ENCODE measurements at regions of chr16 and their contacts with region 1.

Region 1: DNA sequence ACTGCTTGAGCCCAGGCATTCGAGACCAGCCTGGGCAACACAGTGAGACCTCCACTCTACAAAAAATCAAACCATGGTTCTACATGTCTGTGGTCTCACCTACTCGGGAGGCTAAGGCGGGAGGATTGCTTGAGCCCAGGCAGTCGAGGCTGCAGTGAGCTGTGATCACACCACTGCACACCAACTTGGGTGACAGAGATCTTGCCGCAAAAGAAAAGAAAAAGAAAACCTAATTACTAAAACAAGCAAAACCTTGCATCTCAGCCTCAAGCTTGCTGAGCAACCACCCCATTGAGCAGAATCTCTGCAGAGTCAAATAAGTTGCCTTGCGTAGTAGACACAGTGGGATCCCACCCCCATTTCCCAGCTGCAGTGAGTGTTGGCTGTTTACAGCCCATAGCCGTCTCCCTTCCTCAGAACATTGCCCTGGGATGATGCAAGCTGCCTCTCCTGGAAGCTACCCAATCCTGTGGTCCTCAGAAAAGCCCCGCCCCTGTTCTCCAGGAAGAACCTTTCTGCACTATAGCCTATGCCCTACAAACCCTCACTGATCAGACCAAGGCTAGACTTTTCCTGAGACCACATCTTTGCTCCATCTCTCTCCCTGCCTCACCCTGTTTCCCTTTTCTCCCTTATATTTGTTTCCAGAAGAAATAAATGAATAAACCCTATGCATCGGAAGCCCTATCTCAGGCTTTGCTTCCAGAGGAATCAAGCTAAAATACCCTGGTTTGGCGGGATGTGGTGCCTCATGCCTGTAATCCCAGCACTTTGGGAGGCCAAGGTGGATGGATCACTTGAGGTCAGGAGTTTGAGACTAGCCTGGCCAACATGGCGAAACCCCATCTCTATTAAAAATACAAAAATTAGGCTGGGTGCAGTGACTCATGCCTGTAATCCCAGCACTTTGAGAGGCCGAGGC is 16.7 kb upstream of the ERN2 start:
- DNase-seq: peak in 2 of 7 donors; percentile 20 to 28
- H3K4me3 ChIP-seq: no peak overlapping the region
- H3K27ac ChIP-seq: no peak overlapping the region
- H3K4me1 ChIP-seq: no peaks in the 10 kb centered on the region
- H3K27me3 ChIP-seq: no peaks in the 10 kb centered on the region
- CTCF ChIP-seq: no peak
- POLR2A ChIP-seq: no peak

Region 2: GRCh38 chr16:24036614-24037013 is 306.9 kb after region 1 on chr16:
- intact Hi-C with region 1: loop called in 1 of 2 experiments (anchors 10 kb)
- DNase-seq: peak in 6 of 7 donors; percentile 26 to 60 (median 34)
- H3K4me3 ChIP-seq: no peak overlapping the region
- H3K27ac ChIP-seq: no peak overlapping the region
- H3K4me1 ChIP-seq: no peaks in the 10 kb centered on the region
- H3K27me3 ChIP-seq: peaks cover 5% of the 10 kb centered on the region
- CTCF ChIP-seq: peak; percentile 41 to 74 (median 66)
- POLR2A ChIP-seq: no peak